Mammary epithelial cell (primary cell): ENCODE measurements at regions of chr1 and their contacts with region 1.

Region 1: GRCh38 chr1:203600782-203601736 is 25.6 kb upstream of the ATP2B4 start:
- DNase-seq: no peak
- H3K4me3 ChIP-seq: no peak overlapping the region
- H3K27ac ChIP-seq: no peak overlapping the region
- H3K4me1 ChIP-seq: peaks cover 13% of the 10 kb centered on the region
- H3K27me3 ChIP-seq: no peaks in the 10 kb centered on the region
- CTCF ChIP-seq: no peak

Region 2: DNA sequence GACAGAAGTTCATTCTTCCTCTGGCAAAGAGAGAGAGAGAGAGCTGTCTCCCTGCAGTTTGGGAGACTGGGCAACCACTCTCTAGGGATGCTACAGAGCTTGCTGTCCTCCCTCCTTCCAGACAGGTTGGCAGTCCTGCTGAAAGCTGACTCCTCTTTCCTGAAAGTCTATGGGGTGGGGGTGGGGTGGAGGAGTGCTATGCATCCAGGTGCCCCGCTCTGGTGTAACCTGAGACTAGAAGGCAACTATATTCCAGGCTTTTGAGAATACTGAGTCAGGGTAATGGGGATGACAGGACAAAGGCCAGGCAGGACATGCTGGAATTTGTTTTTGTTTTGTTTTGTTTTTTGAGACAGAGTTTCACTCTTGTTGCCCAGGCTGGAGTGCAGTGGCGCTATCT is 51.8 kb before region 1 on chr1:
- CTCF ChIA-PET with region 1: interaction called, 3 read pairs
- dilution Hi-C with region 1: loop called (anchors 5 kb)
- in situ Hi-C with region 1: no loop called
- intact Hi-C with region 1: no loop called
- DNase-seq: peak; percentile 60
- H3K4me3 ChIP-seq: no peak overlapping the region
- H3K27ac ChIP-seq: no peak overlapping the region
- H3K4me1 ChIP-seq: peaks cover 15% of the 10 kb centered on the region
- H3K27me3 ChIP-seq: no peaks in the 10 kb centered on the region
- CTCF ChIP-seq: no peak